Activated T-helper 2 cell treated with anti-CD3 and anti-CD28 coated beads, Interferon-gamma antibody, Interleukin-2, Interleukin-4, amounts not matched to agents 10 μg/mL and 5 μg/mL and 100 μg/mL, durations not matched to agents 14 hours and 24 hours and 36 hours (primary cell): ENCODE measurements at regions of chr2 and their contacts with region 1.

Region 1: DNA sequence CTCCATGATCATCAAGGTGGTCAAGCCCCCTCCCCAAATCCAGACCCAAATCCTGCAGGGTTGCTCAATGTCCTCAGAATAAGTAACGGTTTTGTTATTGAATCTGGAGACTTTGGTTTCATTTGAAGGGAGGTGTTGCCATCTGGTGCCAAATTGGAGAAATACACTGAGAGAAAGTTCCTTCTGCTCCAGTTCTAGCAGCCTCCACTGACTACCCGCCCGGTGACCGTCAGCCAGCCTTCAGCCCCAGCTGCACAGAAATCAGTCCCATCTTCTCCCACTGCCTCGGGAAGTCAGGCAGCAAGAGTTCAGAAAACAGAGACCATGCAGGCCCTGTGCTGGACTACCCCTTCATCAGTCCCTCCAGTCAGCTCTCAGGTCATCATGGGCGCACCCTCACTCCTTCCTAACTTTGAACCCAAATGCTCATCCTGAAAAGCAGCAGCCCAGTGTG is 38.7 kb downstream of the PKDCC start:
- DNase-seq: no peak
- H3K4me3 Mint-ChIP-seq: no peak overlapping the region
- H3K27ac Mint-ChIP-seq: no peak overlapping the region
- H3K4me1 Mint-ChIP-seq: peaks cover 9% of the 10 kb centered on the region
- H3K27me3 Mint-ChIP-seq: peaks cover 26% of the 10 kb centered on the region

Region 2: GRCh38 chr2:41840702-41841551 is 245.6 kb before region 1 on chr2:
- intact Hi-C with region 1: loop called (anchors 1 kb)
- DNase-seq: peak; percentile 96
- H3K4me3 Mint-ChIP-seq: peak overlapping the region; percentile 88
- H3K27ac Mint-ChIP-seq: peak overlapping the region; percentile 74
- H3K4me1 Mint-ChIP-seq: peaks cover 5% of the 10 kb centered on the region
- H3K27me3 Mint-ChIP-seq: peaks cover 9% of the 10 kb centered on the region

Region 3: DNA sequence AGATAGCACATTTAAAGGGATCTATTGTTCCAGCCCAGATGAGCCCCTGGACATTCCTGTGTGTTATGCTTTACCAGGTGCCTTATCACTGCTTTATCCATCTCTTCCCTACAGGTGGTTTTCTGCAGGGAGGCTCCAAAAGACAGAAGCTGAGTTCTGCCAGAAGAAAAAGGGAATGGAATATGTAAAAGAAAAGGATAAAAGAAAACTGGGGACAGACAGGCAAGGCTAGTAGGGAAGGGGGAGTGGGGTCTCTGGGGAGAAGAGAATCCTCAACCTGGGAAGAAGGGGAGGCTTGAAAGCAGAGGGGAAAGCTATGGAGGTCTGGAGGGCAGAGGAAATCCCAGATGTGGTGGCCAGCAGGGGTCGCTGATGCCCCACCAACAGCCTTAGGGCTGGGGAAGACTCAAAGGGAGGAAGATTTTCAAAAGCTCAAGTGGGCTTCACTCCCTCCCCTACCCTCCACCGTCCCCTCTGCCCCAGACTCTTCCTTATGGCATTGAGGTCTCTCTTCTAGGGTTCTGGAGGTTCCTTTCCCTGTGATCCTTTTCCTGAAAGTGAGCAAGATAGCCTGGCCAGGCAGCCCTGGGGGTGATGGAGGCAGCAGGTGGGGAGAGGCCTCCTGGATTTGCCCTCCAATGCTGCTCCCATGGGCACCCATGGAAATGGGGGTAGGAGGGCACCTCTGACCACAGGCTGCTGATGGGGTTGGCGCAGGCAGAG is 216.8 kb before region 1 on chr2:
- intact Hi-C with region 1: loop called (anchors 1 kb)
- DNase-seq: peak; percentile 43
- H3K4me3 Mint-ChIP-seq: no peak overlapping the region
- H3K27ac Mint-ChIP-seq: no peak overlapping the region
- H3K4me1 Mint-ChIP-seq: peaks cover 3% of the 10 kb centered on the region
- H3K27me3 Mint-ChIP-seq: peaks cover 19% of the 10 kb centered on the region

Region 4: DNA sequence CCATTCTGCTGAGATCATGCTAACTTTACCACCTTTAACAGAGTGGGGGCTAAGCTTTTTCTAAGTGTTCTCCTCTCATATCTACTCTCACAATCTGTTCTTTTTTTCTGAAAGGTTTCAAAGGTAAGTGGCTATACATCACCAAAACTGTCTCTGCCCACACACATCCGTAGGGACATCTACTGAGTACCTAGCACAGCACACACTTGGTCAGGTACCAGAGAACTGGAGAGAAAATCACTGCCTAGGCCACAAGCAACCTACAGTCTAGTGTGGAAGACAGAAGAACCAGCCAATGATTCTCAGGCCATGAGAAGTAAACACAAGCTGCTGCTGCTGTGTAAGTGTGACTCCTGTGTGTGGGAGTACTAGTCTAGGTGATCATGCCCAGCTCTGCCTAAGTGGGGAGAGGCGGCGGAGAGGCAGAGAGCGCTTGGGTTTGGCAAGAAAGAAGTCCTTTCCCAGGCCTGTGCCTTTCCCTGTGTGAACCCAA is 1316.0 kb after region 1 on chr2:
- intact Hi-C with region 1: no loop called
- DNase-seq: no peak
- H3K4me3 Mint-ChIP-seq: no peak overlapping the region
- H3K27ac Mint-ChIP-seq: no peak overlapping the region
- H3K4me1 Mint-ChIP-seq: peaks cover 15% of the 10 kb centered on the region
- H3K27me3 Mint-ChIP-seq: no peaks in the 10 kb centered on the region